Body of pancreas (tissue), 4 donors: ENCODE measurements at regions of chr2 and their contacts with region 1.

Region 1: DNA sequence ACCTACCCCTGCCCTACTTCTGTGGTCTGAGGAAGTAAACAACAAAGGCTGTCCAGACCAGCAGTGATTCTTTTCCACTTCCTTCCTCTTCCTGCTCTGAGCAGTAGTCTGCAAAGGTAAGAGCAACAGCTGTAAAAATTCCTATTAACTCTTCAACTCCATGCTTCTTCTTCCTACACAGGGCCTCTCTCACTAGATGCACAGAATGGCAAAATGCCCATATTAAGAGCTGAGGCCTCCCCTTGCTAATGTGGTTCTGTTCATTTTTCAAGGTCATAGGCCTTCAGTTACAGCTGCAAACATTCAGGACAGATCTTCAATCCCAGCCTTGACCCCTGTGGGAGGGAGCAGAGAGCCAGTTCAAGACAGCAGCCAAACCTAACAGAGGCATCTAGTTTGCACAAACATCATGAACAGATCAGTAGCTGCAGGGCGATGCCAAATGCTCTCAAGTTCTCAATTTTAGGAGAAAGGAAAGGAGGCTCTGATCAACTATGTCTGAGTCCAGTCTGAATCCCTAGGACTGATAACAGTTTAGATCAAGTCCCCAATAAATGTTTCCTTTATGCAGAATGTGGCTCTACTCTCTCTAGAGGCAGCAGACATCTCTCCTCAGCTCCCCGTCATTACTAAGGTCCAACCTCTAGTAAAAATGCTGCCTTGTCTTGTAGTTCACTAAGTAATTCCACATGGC is 20.9 kb downstream of the SLC40A1 start:
- DNase-seq: peak in 1 of 4 donors; percentile 13
- ATAC-seq: no peak
- H3K4me3 ChIP-seq: no peak overlapping the region
- H3K27ac ChIP-seq: no peak overlapping the region
- H3K4me1 ChIP-seq: peaks cover 15% of the 10 kb centered on the region
- H3K27me3 ChIP-seq: no peaks in the 10 kb centered on the region
- CTCF ChIP-seq: no peak
- POLR2A ChIP-seq: no peak

Region 2: GRCh38 chr2:189440947-189441708 is 118.6 kb before region 1 on chr2 and contains the start of gene WDR75:
- intact Hi-C with region 1: loop called (anchors 10 kb)
- DNase-seq: peak; percentile 92 to 95 (median 93)
- ATAC-seq: peak; percentile 99
- H3K4me3 ChIP-seq: peak within 1 kb of the TSS; percentile 59 to 75
- H3K27ac ChIP-seq: peak within 1 kb of the TSS; percentile 80 to 94 (median 88)
- H3K4me1 ChIP-seq: peaks cover 25% of the 10 kb centered on the region
- H3K27me3 ChIP-seq: no peaks in the 10 kb centered on the region
- CTCF ChIP-seq: peak in 3 of 7 experiments; percentile 21 to 25 (median 23)
- POLR2A ChIP-seq: peak; percentile 35 to 94 (median 91)
- total RNA-seq, gene WDR75: 14.2 to 26.2 TPM

Region 3: DNA sequence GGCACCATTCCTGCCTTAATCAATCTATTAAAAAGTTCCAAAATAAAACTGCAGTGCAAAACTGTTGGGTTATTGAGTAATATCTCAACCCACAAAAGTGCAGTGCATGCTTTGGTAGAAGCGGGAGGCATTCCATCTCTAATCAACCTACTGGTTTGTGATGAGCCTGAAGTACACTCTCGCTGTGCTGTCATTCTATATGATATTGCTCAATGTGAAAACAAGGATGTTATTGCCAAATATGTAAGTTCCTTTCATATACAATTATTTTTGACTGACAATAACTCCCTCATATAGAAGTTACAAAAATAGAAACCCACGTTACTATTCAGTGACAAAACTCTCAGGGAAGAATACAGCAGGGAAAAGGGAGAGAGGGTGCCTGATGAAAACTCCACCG is 159.8 kb after region 1 on chr2:
- intact Hi-C with region 1: no loop called
- DNase-seq: no peak
- ATAC-seq: no peak
- H3K4me3 ChIP-seq: no peak overlapping the region
- H3K27ac ChIP-seq: no peak overlapping the region
- H3K4me1 ChIP-seq: no peaks in the 10 kb centered on the region
- H3K27me3 ChIP-seq: no peaks in the 10 kb centered on the region
- CTCF ChIP-seq: no peak
- POLR2A ChIP-seq: no peak